GM12878 (cell line): ENCODE measurements at regions of chr2 and their contacts with region 1.

Region 1: GRCh38 chr2:10043906-10044601 is 704 bp downstream of the KLF11 start:
- DNase-seq: no peak
- ATAC-seq: peak; percentile 54
- H3K4me3 ChIP-seq: no peak overlapping the region
- H3K27ac ChIP-seq: no peak overlapping the region
- H3K4me1 ChIP-seq: no peaks in the 10 kb centered on the region
- H3K27me3 ChIP-seq: peaks cover 0 to 4% of the 10 kb centered on the region in 2 experiments; a peak in 1 of 4 replicates
- CTCF ChIP-seq: no peak
- EP300 ChIP-seq: no peak
- POLR2A ChIP-seq: no peak
- RAD21 ChIP-seq: no peak

Region 2: GRCh38 chr2:9770308-9771100 is 273.6 kb before region 1 on chr2:
- CTCF ChIA-PET with region 1: interaction called, 7 read pairs
- POLR2A ChIA-PET with region 1: no interaction called
- RAD21 ChIA-PET with region 1: interaction called, 5 read pairs
- SMC1A ChIA-PET with region 1: interaction called, 14 read pairs
- in situ Hi-C with region 1: no loop called
- intact Hi-C with region 1: no loop called
- DNase-seq: no peak
- ATAC-seq: peak; percentile 83
- H3K4me3 ChIP-seq: no peak overlapping the region
- H3K27ac ChIP-seq: no peak overlapping the region
- H3K4me1 ChIP-seq: peaks cover 6% of the 10 kb centered on the region; the same call in 1 of the 2 replicates
- H3K27me3 ChIP-seq: no peaks in the 10 kb centered on the region; a peak in 2 of 4 replicates
- CTCF ChIP-seq: peak; percentile 61 to 74 (median 73)
- EP300 ChIP-seq: no peak
- POLR2A ChIP-seq: no peak
- RAD21 ChIP-seq: peak; percentile 58

Region 3: GRCh38 chr2:9799665-9800632 is 244.1 kb before region 1 on chr2:
- CTCF ChIA-PET with region 1: interaction called, 60 read pairs
- POLR2A ChIA-PET with region 1: no interaction called
- RAD21 ChIA-PET with region 1: interaction called, 33 read pairs
- SMC1A ChIA-PET with region 1: interaction called, 37 read pairs
- in situ Hi-C with region 1: no loop called
- intact Hi-C with region 1: loop called (anchors 1 kb)
- DNase-seq: peak; percentile 47
- ATAC-seq: peak; percentile 93
- H3K4me3 ChIP-seq: no peak overlapping the region; the same call in 1 of the 2 replicates
- H3K27ac ChIP-seq: no peak overlapping the region
- H3K4me1 ChIP-seq: peaks cover 11% of the 10 kb centered on the region
- H3K27me3 ChIP-seq: no peaks in the 10 kb centered on the region; a peak in 1 of 4 replicates
- CTCF ChIP-seq: peak; percentile 97 to 100 (median 98)
- EP300 ChIP-seq: no peak
- POLR2A ChIP-seq: no peak
- RAD21 ChIP-seq: peak; percentile 84

Region 4: GRCh38 chr2:10028988-10029874 is 14.8 kb before region 1 on chr2:
- CTCF ChIA-PET with region 1: interaction called, 45 read pairs
- POLR2A ChIA-PET with region 1: no interaction called
- RAD21 ChIA-PET with region 1: interaction called, 4 read pairs
- SMC1A ChIA-PET with region 1: interaction called, 11 read pairs
- in situ Hi-C with region 1: no loop called
- intact Hi-C with region 1: no loop called
- DNase-seq: no peak
- ATAC-seq: peak; percentile 89
- H3K4me3 ChIP-seq: no peak overlapping the region
- H3K27ac ChIP-seq: no peak overlapping the region
- H3K4me1 ChIP-seq: peaks cover 11% of the 10 kb centered on the region
- H3K27me3 ChIP-seq: no peaks in the 10 kb centered on the region
- CTCF ChIP-seq: 0 out of 6 replicates have a peak, but pooled peaks of 1 of the 3 experiments have one; percentile 3
- EP300 ChIP-seq: no peak
- POLR2A ChIP-seq: no peak
- RAD21 ChIP-seq: no peak

Region 5: DNA sequence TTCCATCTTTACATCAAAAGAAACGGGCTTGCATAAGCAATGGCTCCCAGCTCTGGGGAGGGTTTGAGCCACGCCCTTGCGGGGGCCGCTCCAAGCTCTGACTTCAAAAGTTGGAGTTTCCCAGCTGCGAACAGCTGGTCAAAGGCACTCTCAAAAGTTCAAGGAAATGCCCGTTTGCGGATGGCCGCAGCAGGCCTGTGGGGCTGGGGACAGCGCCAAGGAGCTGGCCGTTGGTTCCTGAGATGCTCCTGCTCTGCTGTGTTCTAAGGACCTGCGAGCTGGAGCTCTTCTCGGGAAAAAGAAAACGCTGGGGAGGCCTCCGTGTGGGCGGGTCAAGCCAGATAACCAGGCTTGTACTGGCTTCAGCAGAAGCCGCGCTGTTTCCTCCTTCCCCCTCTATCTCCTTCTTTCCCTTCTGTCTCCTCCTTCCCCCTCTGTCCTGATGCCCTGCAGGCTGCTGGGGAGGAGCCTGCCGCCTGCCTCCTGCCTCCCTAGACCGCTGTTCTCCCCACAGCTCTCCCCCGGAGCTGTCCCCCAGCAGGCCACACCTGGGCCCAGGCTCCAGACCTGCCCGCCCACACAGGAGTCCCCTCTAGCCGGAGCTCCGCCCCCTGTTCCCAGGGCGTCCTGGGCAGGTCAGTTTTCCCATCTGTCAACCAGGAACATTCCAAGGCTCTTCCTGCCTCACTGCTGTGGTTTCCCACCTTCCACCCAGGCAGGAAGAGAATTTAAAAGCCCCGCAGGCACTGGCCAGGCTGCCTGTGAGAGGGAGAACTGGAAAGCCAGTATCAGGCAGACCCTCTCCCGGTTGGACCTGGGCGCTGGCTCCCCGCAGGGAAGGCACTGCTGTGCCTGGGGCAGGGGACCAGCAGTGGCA is 13.4 kb after region 1 on chr2:
- CTCF ChIA-PET with region 1: interaction called, 11 read pairs
- POLR2A ChIA-PET with region 1: interaction called, 4 read pairs
- RAD21 ChIA-PET with region 1: interaction called, 3 read pairs
- SMC1A ChIA-PET with region 1: interaction called, 6 read pairs
- in situ Hi-C with region 1: no loop called
- intact Hi-C with region 1: no loop called
- DNase-seq: no peak
- ATAC-seq: peak; percentile 48
- H3K4me3 ChIP-seq: no peak overlapping the region
- H3K27ac ChIP-seq: no peak overlapping the region
- H3K4me1 ChIP-seq: no peaks in the 10 kb centered on the region
- H3K27me3 ChIP-seq: no peaks in the 10 kb centered on the region; a peak in 1 of 4 replicates
- CTCF ChIP-seq: no peak
- EP300 ChIP-seq: no peak
- POLR2A ChIP-seq: no peak
- RAD21 ChIP-seq: no peak

Region 6: GRCh38 chr2:10097352-10098148 is 53.5 kb after region 1 on chr2:
- CTCF ChIA-PET with region 1: interaction called, 10 read pairs
- POLR2A ChIA-PET with region 1: no interaction called
- RAD21 ChIA-PET with region 1: no interaction called
- SMC1A ChIA-PET with region 1: no interaction called
- in situ Hi-C with region 1: no loop called
- intact Hi-C with region 1: no loop called
- DNase-seq: no peak
- ATAC-seq: peak; percentile 96
- H3K4me3 ChIP-seq: no peak overlapping the region
- H3K27ac ChIP-seq: no peak overlapping the region
- H3K4me1 ChIP-seq: peaks cover 2% of the 10 kb centered on the region; the same call in 1 of the 2 replicates
- H3K27me3 ChIP-seq: no peaks in the 10 kb centered on the region
- CTCF ChIP-seq: peak; percentile 91 to 99 (median 92)
- EP300 ChIP-seq: no peak
- POLR2A ChIP-seq: no peak
- RAD21 ChIP-seq: peak; percentile 80